RWPE1 (cell line): ENCODE measurements at regions of chr9 and their contacts with region 1.

Region 1: DNA sequence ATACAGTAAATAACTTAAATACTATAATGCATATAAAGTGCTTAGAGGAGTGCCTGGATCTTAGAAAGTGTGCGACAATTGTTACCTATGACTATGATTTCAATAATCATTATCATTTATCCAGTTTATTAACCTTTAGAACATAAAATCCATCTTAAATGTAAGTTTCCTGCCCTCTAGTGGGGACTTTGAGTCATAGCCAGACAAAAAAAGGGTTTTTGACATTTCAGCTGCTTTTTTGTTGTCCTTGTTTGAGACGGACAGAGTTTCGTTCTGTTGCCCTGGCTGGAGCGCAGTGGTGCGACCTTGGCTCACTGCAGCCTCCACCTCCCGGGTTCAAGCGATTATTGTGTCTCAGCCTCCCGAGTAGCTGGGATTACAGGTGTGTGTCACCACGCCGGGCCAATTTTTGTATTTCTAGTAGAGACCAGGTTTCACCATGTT is 9.7 kb upstream of the C9orf152 start:
- DNase-seq: peak; percentile 51
- H3K27ac ChIP-seq: no peak overlapping the region
- CTCF ChIP-seq: peak; percentile 95

Region 2: GRCh38 chr9:110183208-110184145 is 34.2 kb before region 1 on chr9:
- CTCF ChIA-PET with region 1: interaction called, 10 read pairs
- POLR2A ChIA-PET with region 1: no interaction called
- DNase-seq: peak; percentile 80
- H3K27ac ChIP-seq: no peak overlapping the region
- CTCF ChIP-seq: peak; percentile 86

Region 3: DNA sequence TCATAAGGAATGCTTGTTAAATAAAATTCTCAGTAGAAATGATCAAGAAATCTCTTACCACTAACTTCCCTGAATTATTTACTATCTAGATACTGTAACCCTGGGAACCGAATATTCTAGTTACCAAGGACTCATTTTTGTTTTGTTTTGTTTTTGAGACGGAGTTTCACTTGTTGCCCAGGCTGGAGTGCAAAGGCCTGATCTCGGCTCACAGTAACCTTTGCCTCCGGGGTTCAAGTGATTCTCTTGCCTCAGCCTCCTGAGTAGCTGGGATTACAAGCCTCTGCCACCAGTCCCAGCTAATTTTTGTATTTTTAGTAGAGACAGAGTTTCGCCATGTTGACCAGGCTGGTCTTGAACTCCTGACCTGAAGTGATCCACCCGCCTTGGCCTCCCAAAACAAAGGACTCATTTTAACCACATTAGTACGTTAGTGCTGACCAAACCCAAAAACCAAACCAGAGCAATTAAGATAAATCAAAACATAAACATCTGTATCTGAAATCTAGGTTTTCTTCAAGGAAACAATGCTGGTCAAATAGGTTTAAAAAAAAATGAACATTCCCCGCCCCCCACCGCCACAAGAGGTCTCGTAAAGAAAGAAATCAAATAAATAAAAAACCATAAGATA is 34.9 kb after region 1 on chr9:
- CTCF ChIA-PET with region 1: no interaction called
- POLR2A ChIA-PET with region 1: no interaction called
- DNase-seq: no peak
- H3K27ac ChIP-seq: peak overlapping the region; percentile 28; the same call in 1 of the 2 replicates
- CTCF ChIP-seq: no peak